Common myeloid progenitor, CD34-positive (primary cell): ENCODE measurements at regions of chr9 and their contacts with region 1.

Region 1: GRCh38 chr9:99906403-99907207 is at the start of gene STX17:
- DNase-seq: peak; percentile 86 to 93 (median 92)
- H3K4me3 ChIP-seq: peak within 1 kb of the TSS; percentile 76 to 96 (median 91)
- H3K27ac ChIP-seq: peak within 1 kb of the TSS; percentile 94 to 97
- H3K4me1 ChIP-seq: peaks cover 13 to 23% (median 18%) of the 10 kb centered on the region in 4 experiments
- H3K27me3 ChIP-seq: no peaks in the 10 kb centered on the region

Region 2: GRCh38 chr9:99896119-99896518 is 10.5 kb before region 1 on chr9:
- CTCF ChIA-PET with region 1: interaction called, 15 read pairs
- POLR2A ChIA-PET with region 1: no interaction called
- DNase-seq: no peak
- H3K4me3 ChIP-seq: no peak overlapping the region
- H3K27ac ChIP-seq: no peak overlapping the region
- H3K4me1 ChIP-seq: no peaks in the 10 kb centered on the region
- H3K27me3 ChIP-seq: no peaks in the 10 kb centered on the region

Region 3: DNA sequence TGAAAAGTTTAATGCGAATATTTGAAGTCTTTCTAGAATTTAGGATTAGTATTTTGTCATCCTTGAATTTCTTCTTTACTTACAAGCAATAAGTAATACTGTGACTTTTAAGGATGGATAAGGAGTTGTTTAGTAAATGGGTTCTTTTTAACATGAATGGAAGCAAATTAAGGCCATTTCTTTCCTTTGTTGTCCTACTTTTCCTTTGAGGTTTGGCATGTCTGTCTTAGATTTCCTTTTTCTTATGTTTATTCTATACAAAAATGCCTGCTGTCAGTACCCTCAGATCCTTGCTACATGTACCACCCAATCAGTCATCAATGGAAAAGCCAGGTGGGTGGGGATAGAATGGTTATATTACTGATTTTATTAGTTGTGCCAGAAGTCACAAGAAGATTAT is 10.0 kb after region 1 on chr9:
- CTCF ChIA-PET with region 1: interaction called, 27 read pairs
- POLR2A ChIA-PET with region 1: no interaction called
- DNase-seq: no peak
- H3K4me3 ChIP-seq: no peak overlapping the region
- H3K27ac ChIP-seq: no peak overlapping the region
- H3K4me1 ChIP-seq: peaks cover 0 to 8% (median 4%) of the 10 kb centered on the region in 4 experiments
- H3K27me3 ChIP-seq: no peaks in the 10 kb centered on the region